ENCODE measurements at regions of chr16 and their contacts with region 1.

Region 1: GRCh38 chr16:75764154-75764768 is 38.0 kb upstream of the CPHXL start:
- DNase-seq: peak; percentile 70
- H3K4me3 Mint-ChIP-seq: no peak overlapping the region
- H3K27ac Mint-ChIP-seq: no peak overlapping the region
- H3K4me1 Mint-ChIP-seq: peaks cover 11% of the 10 kb centered on the region
- H3K27me3 Mint-ChIP-seq: peaks cover 4% of the 10 kb centered on the region

Region 2: DNA sequence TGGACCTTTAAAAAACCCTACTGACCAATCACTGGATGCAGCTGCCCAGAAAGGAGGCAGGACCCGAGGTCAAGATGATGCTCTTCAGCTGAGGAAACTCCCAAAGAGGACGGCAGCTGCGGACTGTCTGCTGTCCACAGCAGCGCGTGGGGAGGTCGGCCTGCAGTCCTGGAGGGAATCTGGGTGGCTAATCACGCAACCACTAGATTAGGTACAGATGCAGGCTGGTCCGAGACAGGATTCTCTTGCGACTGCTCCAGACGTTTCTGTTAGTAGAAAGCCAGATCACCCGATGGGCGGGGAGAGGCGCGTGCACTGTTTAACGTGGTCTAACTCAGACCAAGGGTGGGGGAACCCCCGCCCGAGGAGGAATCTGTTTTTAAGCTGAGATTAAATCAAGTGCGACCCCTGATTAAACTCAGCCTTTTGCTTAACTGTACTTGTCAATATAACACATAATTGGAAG is 566.1 kb before region 1 on chr16:
- CTCF ChIA-PET with region 1: interaction called, 18 read pairs
- POLR2A ChIA-PET with region 1: no interaction called
- intact Hi-C with region 1: loop called (anchors 1 kb)
- DNase-seq: no peak
- H3K4me3 Mint-ChIP-seq: no peak overlapping the region
- H3K27ac Mint-ChIP-seq: no peak overlapping the region
- H3K4me1 Mint-ChIP-seq: peaks cover 9% of the 10 kb centered on the region
- H3K27me3 Mint-ChIP-seq: peaks cover 13% of the 10 kb centered on the region

Region 3: GRCh38 chr16:75471723-75472633 is 292.3 kb before region 1 on chr16:
- CTCF ChIA-PET with region 1: interaction called, 20 read pairs
- POLR2A ChIA-PET with region 1: no interaction called
- intact Hi-C with region 1: loop called (anchors 1 kb)
- DNase-seq: peak; percentile 54
- H3K4me3 Mint-ChIP-seq: no peak overlapping the region
- H3K27ac Mint-ChIP-seq: no peak overlapping the region
- H3K4me1 Mint-ChIP-seq: no peaks in the 10 kb centered on the region
- H3K27me3 Mint-ChIP-seq: no peaks in the 10 kb centered on the region

Region 4: DNA sequence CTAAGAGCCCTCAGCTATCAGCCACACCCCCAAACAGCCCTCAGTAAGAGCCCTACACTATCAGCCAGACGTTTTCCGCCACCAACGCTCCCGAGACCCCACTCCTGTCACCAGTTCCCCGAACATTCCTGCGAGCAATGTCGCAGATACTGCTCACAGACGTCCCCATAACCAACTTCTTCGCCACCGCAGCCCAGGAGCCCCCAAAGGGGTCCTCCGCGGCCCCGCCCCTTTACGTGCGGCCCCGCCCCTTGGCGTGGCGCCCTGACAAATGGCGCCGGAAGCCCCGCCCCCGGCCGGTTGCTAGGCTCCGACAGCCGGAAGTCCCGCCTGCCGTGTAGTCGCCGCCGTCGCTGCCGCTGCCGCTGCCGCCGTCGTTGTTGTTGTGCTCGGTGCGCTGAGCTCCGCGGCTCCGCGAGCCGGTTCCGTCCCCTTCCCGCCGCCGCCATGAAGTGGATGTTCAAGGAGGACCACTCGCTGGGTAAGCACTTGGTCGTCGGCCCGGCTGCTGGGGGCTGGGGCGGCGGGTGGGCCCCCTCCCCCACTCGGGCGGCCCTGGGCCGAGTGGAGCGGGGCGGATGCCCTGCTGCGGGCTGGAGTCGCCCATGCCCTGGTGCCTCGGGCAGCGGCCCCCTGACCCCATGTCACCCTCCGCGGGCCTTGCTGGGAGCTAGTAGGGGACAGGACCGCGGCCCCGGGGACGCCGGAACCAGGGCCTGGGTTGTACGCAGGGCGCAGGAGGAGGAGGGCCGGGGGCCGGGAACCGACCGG is 198.0 kb before region 1 on chr16 and contains the start of gene GABARAPL2:
- CTCF ChIA-PET with region 1: interaction called, 4 read pairs
- POLR2A ChIA-PET with region 1: no interaction called
- intact Hi-C with region 1: loop called (anchors 5 kb)
- DNase-seq: peak; percentile 92
- H3K4me3 Mint-ChIP-seq: peak within 1 kb of the TSS; percentile 94
- H3K27ac Mint-ChIP-seq: peak within 1 kb of the TSS; percentile 85
- H3K4me1 Mint-ChIP-seq: peaks cover 40% of the 10 kb centered on the region
- H3K27me3 Mint-ChIP-seq: peaks cover 7% of the 10 kb centered on the region
- total RNA-seq, gene GABARAPL2: 71.5 to 76.1 TPM

Region 5: GRCh38 chr16:75622761-75623605 is 141.3 kb before region 1 on chr16 and contains the start of gene ADAT1:
- CTCF ChIA-PET with region 1: no interaction called
- POLR2A ChIA-PET with region 1: no interaction called
- intact Hi-C with region 1: loop called (anchors 1 kb)
- DNase-seq: peak; percentile 99
- H3K4me3 Mint-ChIP-seq: peak within 1 kb of the TSS; percentile 96
- H3K27ac Mint-ChIP-seq: peak within 1 kb of the TSS; percentile 97
- H3K4me1 Mint-ChIP-seq: peaks cover 52% of the 10 kb centered on the region
- H3K27me3 Mint-ChIP-seq: no peaks in the 10 kb centered on the region
- total RNA-seq, gene ADAT1: 39.9 to 40.2 TPM

Measured in activated CD4-positive, alpha-beta memory T cell treated with anti-CD3 and anti-CD28 coated beads for 36 hours (primary cell).